ENCODE measurements at regions of chr12 and their contacts with region 1.

Region 1: DNA sequence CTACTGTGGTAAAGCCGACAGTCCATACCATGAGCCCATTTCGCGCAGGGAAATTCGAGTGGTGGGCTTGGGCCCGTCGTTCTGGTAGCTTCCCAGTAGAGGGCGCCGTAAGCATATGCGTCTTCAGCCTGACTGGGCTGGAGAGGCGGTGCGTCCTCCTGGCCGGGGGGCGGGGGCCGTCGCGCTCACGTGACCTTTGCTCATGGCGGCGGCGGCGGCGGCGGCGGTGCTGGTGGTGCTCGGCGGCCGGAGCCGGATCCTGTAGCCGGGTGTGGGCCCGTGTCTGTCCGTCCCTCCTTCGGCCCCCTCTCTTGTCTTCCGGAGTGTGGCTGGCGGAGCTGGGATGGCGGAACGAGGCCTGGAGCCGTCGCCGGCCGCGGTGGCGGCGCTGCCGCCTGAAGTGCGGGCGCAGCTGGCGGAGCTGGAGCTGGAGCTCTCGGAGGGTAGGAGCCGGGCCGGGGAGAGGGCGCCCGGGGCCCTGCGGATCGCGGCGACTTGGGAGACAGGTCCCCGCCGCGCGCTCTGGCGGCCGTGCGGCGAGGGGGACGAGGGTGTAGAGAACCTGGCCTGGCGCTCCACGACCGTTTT is at the start of gene DIP2B:
- DNase-seq: peak; percentile 98
- ATAC-seq: peak; percentile 87
- H3K4me3 Mint-ChIP-seq: peak within 1 kb of the TSS; percentile 95
- H3K27ac Mint-ChIP-seq: peak within 1 kb of the TSS; percentile 92
- H3K4me1 Mint-ChIP-seq: peaks cover 40% of the 10 kb centered on the region
- H3K27me3 Mint-ChIP-seq: no peaks in the 10 kb centered on the region
- CTCF ChIP-seq: peak; percentile 91
- total RNA-seq, gene DIP2B: 21.2 to 23.7 TPM

Region 2: GRCh38 chr12:50003595-50003994 is 501.3 kb before region 1 on chr12:
- CTCF ChIA-PET with region 1: no interaction called
- POLR2A ChIA-PET with region 1: no interaction called
- intact Hi-C with region 1: no loop called
- DNase-seq: no peak
- ATAC-seq: no peak
- H3K4me3 Mint-ChIP-seq: no peak overlapping the region
- H3K27ac Mint-ChIP-seq: no peak overlapping the region
- H3K4me1 Mint-ChIP-seq: peaks cover 4% of the 10 kb centered on the region
- H3K27me3 Mint-ChIP-seq: no peaks in the 10 kb centered on the region
- CTCF ChIP-seq: no peak

Region 3: DNA sequence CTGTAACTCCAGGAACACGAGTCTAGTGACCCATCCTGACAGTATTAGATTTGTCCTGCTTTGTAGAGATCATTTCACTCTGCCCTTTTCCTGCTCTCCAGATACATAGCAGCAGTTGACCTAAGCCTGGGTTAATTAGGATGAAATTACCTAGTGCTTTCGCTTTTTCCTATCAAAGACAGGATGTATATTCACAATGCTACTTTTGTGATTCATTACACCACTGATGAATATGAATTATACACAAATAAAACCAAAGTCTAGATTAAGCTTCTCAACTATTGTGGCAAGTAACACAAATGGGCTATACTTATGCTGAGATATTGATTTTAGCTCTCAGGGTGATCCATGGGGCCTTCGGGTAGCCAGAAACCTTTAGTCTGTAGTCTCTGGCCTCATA is 355.6 kb before region 1 on chr12:
- CTCF ChIA-PET with region 1: no interaction called
- POLR2A ChIA-PET with region 1: no interaction called
- intact Hi-C with region 1: no loop called
- DNase-seq: no peak
- ATAC-seq: no peak
- H3K4me3 Mint-ChIP-seq: no peak overlapping the region
- H3K27ac Mint-ChIP-seq: peak overlapping the region; percentile 11
- H3K4me1 Mint-ChIP-seq: peaks cover 25% of the 10 kb centered on the region
- H3K27me3 Mint-ChIP-seq: no peaks in the 10 kb centered on the region
- CTCF ChIP-seq: no peak

Region 4: DNA sequence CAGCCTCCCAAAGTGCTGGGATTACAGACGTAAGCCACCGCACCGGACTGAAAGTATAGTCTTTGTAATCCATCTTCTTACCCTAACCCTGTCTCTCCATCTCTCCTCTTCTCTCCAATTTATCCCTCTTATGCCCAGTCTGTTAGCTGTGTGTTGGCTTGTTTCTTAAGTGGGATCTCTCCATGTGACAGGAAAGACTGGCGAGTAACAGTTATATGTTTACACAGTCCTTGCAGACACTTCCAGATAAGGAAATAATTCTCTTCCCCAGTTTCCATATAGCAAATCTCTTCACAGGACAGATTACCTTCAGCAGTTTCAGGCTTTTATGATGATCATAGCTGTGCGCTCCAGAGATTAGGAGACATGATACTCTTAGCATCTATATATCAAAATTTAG is 16.1 kb before region 1 on chr12:
- CTCF ChIA-PET with region 1: interaction called, 24 read pairs
- POLR2A ChIA-PET with region 1: no interaction called
- intact Hi-C with region 1: no loop called
- DNase-seq: no peak
- ATAC-seq: no peak
- H3K4me3 Mint-ChIP-seq: no peak overlapping the region
- H3K27ac Mint-ChIP-seq: no peak overlapping the region
- H3K4me1 Mint-ChIP-seq: no peaks in the 10 kb centered on the region
- H3K27me3 Mint-ChIP-seq: no peaks in the 10 kb centered on the region
- CTCF ChIP-seq: no peak

Region 5: DNA sequence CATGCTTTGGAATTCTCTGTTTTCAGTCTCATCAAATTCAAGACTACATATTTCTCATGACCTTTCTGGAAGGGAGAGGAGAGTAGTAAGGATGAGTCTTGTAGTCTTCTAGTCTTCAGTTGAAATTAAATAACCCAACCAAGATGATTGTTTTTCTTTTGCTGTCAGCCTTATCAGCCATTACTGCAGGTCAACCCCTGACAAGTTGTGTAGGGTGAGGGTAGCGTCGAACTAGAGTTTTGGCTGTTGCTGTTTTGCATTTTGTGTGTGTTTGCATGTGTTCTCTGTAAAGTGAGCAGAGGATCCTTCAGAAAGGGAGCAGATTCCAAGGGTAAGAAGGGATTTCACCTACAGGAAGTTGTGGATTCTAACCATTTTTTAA is 28.3 kb after region 1 on chr12:
- CTCF ChIA-PET with region 1: interaction called, 8 read pairs
- POLR2A ChIA-PET with region 1: interaction called, 12 read pairs
- intact Hi-C with region 1: no loop called
- DNase-seq: no peak
- ATAC-seq: peak; percentile 21
- H3K4me3 Mint-ChIP-seq: no peak overlapping the region
- H3K27ac Mint-ChIP-seq: no peak overlapping the region
- H3K4me1 Mint-ChIP-seq: peaks cover 38% of the 10 kb centered on the region
- H3K27me3 Mint-ChIP-seq: no peaks in the 10 kb centered on the region
- CTCF ChIP-seq: no peak

Region 6: GRCh38 chr12:50542448-50542847 is 37.6 kb after region 1 on chr12:
- CTCF ChIA-PET with region 1: interaction called, 11 read pairs
- POLR2A ChIA-PET with region 1: interaction called, 7 read pairs
- intact Hi-C with region 1: loop called (anchors 5 kb)
- DNase-seq: peak; percentile 58
- ATAC-seq: peak; percentile 98
- H3K4me3 Mint-ChIP-seq: no peak overlapping the region
- H3K27ac Mint-ChIP-seq: peak overlapping the region; percentile 82
- H3K4me1 Mint-ChIP-seq: peaks cover 46% of the 10 kb centered on the region
- H3K27me3 Mint-ChIP-seq: no peaks in the 10 kb centered on the region
- CTCF ChIP-seq: no peak

Region 7: DNA sequence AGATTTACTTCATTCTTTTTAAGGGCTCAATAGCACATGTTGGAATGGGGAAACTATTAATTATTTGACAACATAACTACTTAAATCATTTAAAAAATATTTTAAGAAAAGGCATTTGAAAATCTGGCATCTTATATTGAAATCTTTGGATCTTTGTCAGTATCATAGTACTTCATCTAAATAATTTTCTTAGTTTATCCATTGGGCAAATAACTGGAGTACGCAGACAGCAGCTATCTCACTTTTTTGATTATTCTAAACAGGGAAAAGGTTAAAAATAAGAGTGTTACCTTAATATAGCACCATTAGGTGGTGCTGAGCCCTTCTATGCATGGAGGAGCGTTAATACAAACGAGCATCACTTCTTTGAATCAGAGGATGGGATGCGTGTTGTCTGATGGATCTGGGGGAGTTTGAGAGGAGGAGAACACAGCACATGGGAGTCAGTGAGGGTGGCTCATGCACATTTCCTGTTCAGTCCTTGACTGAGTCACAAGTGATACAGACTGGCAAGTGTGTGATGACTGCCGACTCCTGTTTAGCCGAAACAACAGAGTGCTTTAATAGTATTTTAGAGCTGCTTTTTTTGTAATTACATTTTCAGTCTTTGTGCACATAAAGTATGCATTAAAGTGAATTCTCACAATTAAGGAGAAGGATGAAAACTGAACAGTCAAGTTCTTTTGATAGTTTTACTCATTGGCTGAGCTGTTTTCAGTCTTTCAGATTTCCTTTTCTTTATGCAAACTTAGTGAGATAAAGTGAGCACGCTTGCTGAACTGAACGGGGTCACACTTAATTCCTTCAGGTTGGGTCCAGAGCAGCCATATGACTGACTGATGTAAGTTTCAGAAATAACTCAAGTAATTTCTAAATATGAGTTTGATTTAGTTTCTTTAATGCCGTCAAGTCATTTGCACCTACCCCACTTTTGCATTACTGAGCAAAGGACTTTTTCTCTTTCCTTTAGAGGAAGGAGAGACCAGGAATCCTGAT is 92.6 kb after region 1 on chr12:
- CTCF ChIA-PET with region 1: interaction called, 31 read pairs
- POLR2A ChIA-PET with region 1: interaction called, 3 read pairs
- intact Hi-C with region 1: no loop called
- DNase-seq: peak; percentile 78
- ATAC-seq: peak; percentile 99
- H3K4me3 Mint-ChIP-seq: peak overlapping the region; percentile 61
- H3K27ac Mint-ChIP-seq: peak overlapping the region; percentile 89
- H3K4me1 Mint-ChIP-seq: peaks cover 37% of the 10 kb centered on the region
- H3K27me3 Mint-ChIP-seq: no peaks in the 10 kb centered on the region
- CTCF ChIP-seq: no peak

Region 8: DNA sequence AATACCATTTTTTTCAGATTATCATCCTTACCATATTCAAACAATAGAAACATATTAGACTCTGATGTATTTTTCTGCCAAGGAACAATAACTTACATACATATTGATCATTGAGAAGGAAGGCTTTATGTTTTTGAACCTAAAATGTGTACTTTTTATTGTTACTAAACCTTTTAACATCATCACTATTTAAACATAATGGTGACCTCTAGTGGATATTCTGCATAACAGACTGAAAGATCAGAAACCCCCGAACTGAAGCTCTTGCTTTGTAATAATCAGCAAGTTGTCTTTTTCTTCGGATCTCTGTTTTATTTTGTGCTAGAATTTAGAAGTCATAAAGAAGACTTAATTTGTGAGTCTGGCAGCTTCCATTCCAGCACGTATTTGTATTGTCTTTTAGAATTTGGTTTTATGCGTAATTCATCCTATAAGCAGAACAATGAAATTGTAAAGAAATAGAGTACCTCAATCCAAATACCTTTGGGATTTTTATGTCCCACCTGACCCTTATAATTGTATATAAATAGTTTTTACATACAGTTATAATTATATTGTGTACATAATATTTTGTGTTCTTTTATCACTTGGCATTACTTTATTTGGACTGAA is 133.1 kb after region 1 on chr12:
- CTCF ChIA-PET with region 1: interaction called, 169 read pairs
- POLR2A ChIA-PET with region 1: interaction called, 8 read pairs
- intact Hi-C with region 1: loop called (anchors 5 kb)
- DNase-seq: no peak
- ATAC-seq: no peak
- H3K4me3 Mint-ChIP-seq: no peak overlapping the region
- H3K27ac Mint-ChIP-seq: peak overlapping the region; percentile 57
- H3K4me1 Mint-ChIP-seq: peaks cover 30% of the 10 kb centered on the region
- H3K27me3 Mint-ChIP-seq: no peaks in the 10 kb centered on the region
- CTCF ChIP-seq: peak; percentile 84

Region 9: GRCh38 chr12:50734409-50735263 is 229.7 kb after region 1 on chr12:
- CTCF ChIA-PET with region 1: interaction called, 5 read pairs
- POLR2A ChIA-PET with region 1: no interaction called
- intact Hi-C with region 1: loop called (anchors 10 kb)
- DNase-seq: peak; percentile 37
- ATAC-seq: no peak
- H3K4me3 Mint-ChIP-seq: no peak overlapping the region
- H3K27ac Mint-ChIP-seq: no peak overlapping the region
- H3K4me1 Mint-ChIP-seq: no peaks in the 10 kb centered on the region
- H3K27me3 Mint-ChIP-seq: no peaks in the 10 kb centered on the region
- CTCF ChIP-seq: peak; percentile 38